Activated CD4-positive, alpha-beta T cell treated with anti-CD3 and anti-CD28 coated beads for 36 hours (primary cell): ENCODE measurements at regions of chr20 and their contacts with region 1.

Region 1: DNA sequence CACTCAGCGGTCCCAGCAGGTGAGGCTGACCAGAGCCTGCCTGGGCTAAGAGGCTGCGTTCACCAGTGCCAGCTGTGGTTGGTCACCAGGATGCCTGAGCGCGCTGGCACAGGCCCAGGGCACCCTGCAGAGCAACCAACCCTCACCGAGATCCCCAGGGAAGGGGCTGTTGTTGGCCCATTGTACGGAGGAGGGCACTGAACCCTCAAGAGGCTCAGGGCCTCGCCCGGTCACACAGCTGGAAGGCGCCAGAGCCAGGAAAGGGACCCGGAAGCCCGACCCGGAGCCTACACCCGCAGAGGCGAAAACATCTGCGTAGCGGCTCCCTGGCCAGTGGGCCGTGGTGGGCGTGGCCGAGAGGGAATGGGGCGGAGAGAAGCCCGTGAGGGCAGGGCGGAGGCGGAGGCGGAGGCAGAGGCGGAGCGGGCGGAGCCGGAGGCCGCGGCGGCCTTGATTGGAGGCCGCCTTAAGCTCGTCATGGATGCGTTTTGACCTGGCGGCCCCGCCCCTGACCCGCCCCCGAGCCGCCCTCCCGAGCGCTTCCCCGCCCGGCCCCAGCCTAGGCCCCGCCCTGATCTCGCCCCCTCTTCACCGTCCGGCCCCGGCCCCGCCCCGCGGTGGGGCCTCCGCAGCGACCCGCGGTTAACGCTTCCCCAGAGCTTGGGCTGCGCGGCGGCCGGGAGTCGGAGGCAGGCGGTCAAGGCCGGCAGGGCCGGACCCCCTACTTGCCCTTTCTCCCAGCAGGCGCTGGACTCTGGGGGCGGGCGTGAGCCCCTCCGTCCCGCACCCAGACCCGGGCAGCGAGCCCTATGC is 2.2 kb upstream of the MRGBP start:
- DNase-seq: peak; percentile 98
- ATAC-seq: peak; percentile 75
- H3K4me3 Mint-ChIP-seq: peak overlapping the region; percentile 80
- H3K27ac Mint-ChIP-seq: peak overlapping the region; percentile 88
- H3K4me1 Mint-ChIP-seq: peaks cover 31% of the 10 kb centered on the region
- H3K27me3 Mint-ChIP-seq: no peaks in the 10 kb centered on the region

Region 2: GRCh38 chr20:61303697-61304096 is 1490.4 kb before region 1 on chr20:
- CTCF ChIA-PET with region 1: no interaction called
- POLR2A ChIA-PET with region 1: no interaction called
- intact Hi-C with region 1: no loop called
- DNase-seq: no peak
- ATAC-seq: no peak
- H3K4me3 Mint-ChIP-seq: no peak overlapping the region
- H3K27ac Mint-ChIP-seq: no peak overlapping the region
- H3K4me1 Mint-ChIP-seq: no peaks in the 10 kb centered on the region
- H3K27me3 Mint-ChIP-seq: no peaks in the 10 kb centered on the region

Region 3: GRCh38 chr20:62182613-62183425 is 611.3 kb before region 1 on chr20 and contains the start of gene MTG2:
- CTCF ChIA-PET with region 1: no interaction called
- POLR2A ChIA-PET with region 1: no interaction called
- intact Hi-C with region 1: loop called in 1 of 2 experiments (anchors 5 kb)
- DNase-seq: peak; percentile 97
- ATAC-seq: peak; percentile 99
- H3K4me3 Mint-ChIP-seq: peak within 1 kb of the TSS; percentile 88
- H3K27ac Mint-ChIP-seq: peak within 1 kb of the TSS; percentile 87
- H3K4me1 Mint-ChIP-seq: peaks cover 39% of the 10 kb centered on the region
- H3K27me3 Mint-ChIP-seq: no peaks in the 10 kb centered on the region
- total RNA-seq, gene MTG2: 38.0 to 44.9 TPM

Region 4: DNA sequence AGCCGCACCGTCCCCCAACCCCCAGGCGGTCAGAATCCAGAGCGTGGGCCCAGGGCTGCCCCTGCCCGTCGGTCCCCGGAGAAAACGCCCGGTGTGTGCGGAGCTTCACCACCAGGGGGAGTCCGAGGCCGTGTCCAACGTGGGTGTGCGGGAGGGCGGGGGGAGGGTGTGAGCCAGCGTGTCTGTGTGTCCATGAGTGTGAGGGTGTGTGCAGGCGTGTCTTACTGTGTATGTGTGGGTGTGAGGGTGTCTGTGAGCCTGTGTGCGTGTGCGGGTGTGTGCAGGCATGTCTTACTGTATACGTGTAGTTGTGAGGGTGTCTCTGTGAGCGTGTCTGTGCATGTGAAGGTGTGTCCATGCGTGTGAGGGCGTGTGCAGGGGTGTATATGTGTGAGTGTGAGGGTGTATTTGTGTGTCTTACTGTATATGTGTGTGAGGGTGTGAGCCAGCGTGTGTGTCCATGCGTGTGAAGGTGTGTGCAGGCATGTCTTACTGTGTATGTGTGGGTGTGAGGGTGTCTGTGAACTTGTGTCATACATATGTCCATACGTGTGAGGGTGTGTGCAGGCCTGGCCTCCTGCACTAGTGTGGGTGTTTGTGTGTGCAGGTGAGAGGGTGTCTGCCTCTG is 293.8 kb before region 1 on chr20:
- CTCF ChIA-PET with region 1: interaction called, 4 read pairs
- POLR2A ChIA-PET with region 1: no interaction called
- intact Hi-C with region 1: loop called (anchors 1 kb)
- DNase-seq: peak; percentile 91
- ATAC-seq: peak; percentile 14
- H3K4me3 Mint-ChIP-seq: no peak overlapping the region
- H3K27ac Mint-ChIP-seq: peak overlapping the region; percentile 82
- H3K4me1 Mint-ChIP-seq: peaks cover 32% of the 10 kb centered on the region
- H3K27me3 Mint-ChIP-seq: peaks cover 1% of the 10 kb centered on the region

Region 5: DNA sequence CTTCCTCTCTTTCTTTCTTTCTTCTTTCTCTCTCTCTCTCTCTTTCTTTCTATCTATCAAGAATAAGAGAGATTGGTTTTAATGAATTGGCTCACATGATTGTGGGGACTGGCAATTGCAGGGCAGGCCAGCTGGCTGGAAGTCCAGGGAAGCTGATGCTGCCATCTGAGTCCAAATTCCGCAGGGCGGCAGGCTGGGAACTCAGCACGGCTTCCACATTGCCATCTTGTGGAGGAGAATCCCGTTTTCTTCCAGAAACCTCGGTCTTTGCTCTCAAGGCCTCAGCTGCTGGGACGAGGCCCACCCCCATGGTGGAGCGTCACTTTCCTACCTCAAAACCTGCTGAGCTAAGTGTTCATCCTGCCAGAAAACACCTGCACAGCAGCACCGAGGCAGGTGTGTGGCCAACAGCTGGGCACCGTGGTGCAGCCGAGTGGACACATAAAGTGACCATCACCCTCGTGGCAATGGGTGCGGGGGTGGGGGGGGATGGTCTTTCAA is 210.6 kb before region 1 on chr20:
- CTCF ChIA-PET with region 1: no interaction called
- POLR2A ChIA-PET with region 1: no interaction called
- intact Hi-C with region 1: no loop called
- DNase-seq: no peak
- ATAC-seq: no peak
- H3K4me3 Mint-ChIP-seq: no peak overlapping the region
- H3K27ac Mint-ChIP-seq: no peak overlapping the region
- H3K4me1 Mint-ChIP-seq: no peaks in the 10 kb centered on the region
- H3K27me3 Mint-ChIP-seq: peaks cover 41% of the 10 kb centered on the region

Region 6: DNA sequence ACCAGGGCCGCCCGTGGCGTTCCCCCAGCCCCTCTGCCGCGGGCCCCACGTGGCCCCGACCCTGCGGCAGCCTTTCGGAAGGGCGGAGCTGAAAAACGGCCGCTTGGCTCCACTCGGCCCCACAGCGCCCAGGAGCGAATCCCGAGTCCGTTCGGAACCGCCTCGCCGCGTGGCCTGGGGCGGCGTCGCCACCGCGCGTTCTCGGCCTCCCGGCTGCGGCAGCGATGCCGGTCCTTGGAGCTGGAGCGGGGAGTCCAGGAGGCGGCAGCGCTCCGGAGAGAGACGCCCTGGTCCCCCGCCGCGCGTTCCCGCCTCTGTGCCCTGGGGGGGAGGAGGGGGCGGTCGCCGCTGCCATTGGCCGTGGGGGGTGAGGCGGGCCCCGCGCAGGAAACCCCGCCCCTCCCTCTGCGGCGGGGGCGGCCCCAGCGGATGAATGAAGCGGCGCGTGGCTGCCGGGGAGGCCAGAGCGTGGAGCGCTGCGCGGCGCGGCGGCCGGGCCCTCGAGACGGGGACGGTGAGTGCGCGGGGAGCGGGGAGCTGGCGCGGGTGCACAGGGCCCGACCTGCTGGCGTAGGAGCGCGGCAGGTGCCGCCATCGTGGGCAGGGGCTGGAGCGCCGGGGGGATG is 152.0 kb before region 1 on chr20 and contains the start of gene SLCO4A1:
- CTCF ChIA-PET with region 1: interaction called, 3 read pairs
- POLR2A ChIA-PET with region 1: interaction called, 4 read pairs
- intact Hi-C with region 1: loop called in 1 of 2 experiments (anchors 1 kb)
- DNase-seq: peak; percentile 93
- ATAC-seq: peak; percentile 94
- H3K4me3 Mint-ChIP-seq: peak within 1 kb of the TSS; percentile 79
- H3K27ac Mint-ChIP-seq: peak within 1 kb of the TSS; percentile 69
- H3K4me1 Mint-ChIP-seq: peaks cover 11% of the 10 kb centered on the region
- H3K27me3 Mint-ChIP-seq: peaks cover 4% of the 10 kb centered on the region
- total RNA-seq, gene SLCO4A1: 40.5 to 43.4 TPM

Region 7: GRCh38 chr20:62740286-62741141 is 53.6 kb before region 1 on chr20:
- CTCF ChIA-PET with region 1: interaction called, 8 read pairs
- POLR2A ChIA-PET with region 1: no interaction called
- intact Hi-C with region 1: loop called (anchors 1 to 5 kb)
- DNase-seq: peak; percentile 90
- ATAC-seq: peak; percentile 86
- H3K4me3 Mint-ChIP-seq: peak overlapping the region; percentile 58
- H3K27ac Mint-ChIP-seq: peak overlapping the region; percentile 89
- H3K4me1 Mint-ChIP-seq: peaks cover 52% of the 10 kb centered on the region
- H3K27me3 Mint-ChIP-seq: peaks cover 3% of the 10 kb centered on the region

Region 8: GRCh38 chr20:62926239-62927104 is 132.4 kb after region 1 on chr20 and contains the start of gene DIDO1:
- CTCF ChIA-PET with region 1: no interaction called
- POLR2A ChIA-PET with region 1: no interaction called
- intact Hi-C with region 1: loop called in 1 of 2 experiments (anchors 2 kb)
- DNase-seq: peak; percentile 94
- ATAC-seq: peak; percentile 78
- H3K4me3 Mint-ChIP-seq: peak within 1 kb of the TSS; percentile 94
- H3K27ac Mint-ChIP-seq: peak within 1 kb of the TSS; percentile 96
- H3K4me1 Mint-ChIP-seq: peaks cover 64% of the 10 kb centered on the region
- H3K27me3 Mint-ChIP-seq: no peaks in the 10 kb centered on the region
- total RNA-seq, gene DIDO1: 43.7 to 49.7 TPM

Region 9: GRCh38 chr20:63032861-63033634 is 238.9 kb after region 1 on chr20:
- CTCF ChIA-PET with region 1: no interaction called
- POLR2A ChIA-PET with region 1: no interaction called
- intact Hi-C with region 1: no loop called
- DNase-seq: peak; percentile 37
- ATAC-seq: peak; percentile 27
- H3K4me3 Mint-ChIP-seq: no peak overlapping the region
- H3K27ac Mint-ChIP-seq: no peak overlapping the region
- H3K4me1 Mint-ChIP-seq: peaks cover 15% of the 10 kb centered on the region
- H3K27me3 Mint-ChIP-seq: peaks cover 17% of the 10 kb centered on the region

Region 10: GRCh38 chr20:63718996-63719395 is 924.9 kb after region 1 on chr20:
- CTCF ChIA-PET with region 1: no interaction called
- POLR2A ChIA-PET with region 1: no interaction called
- intact Hi-C with region 1: no loop called
- DNase-seq: no peak
- ATAC-seq: no peak
- H3K4me3 Mint-ChIP-seq: no peak overlapping the region
- H3K27ac Mint-ChIP-seq: peak overlapping the region; percentile 33
- H3K4me1 Mint-ChIP-seq: peaks cover 45% of the 10 kb centered on the region
- H3K27me3 Mint-ChIP-seq: no peaks in the 10 kb centered on the region

Region 11: GRCh38 chr20:64062596-64063388 is 1268.7 kb after region 1 on chr20 and contains the start of gene TCEA2:
- CTCF ChIA-PET with region 1: no interaction called
- POLR2A ChIA-PET with region 1: no interaction called
- intact Hi-C with region 1: loop called in 1 of 2 experiments (anchors 5 kb)
- DNase-seq: peak; percentile 98
- ATAC-seq: peak; percentile 83
- H3K4me3 Mint-ChIP-seq: peak within 1 kb of the TSS; percentile 82
- H3K27ac Mint-ChIP-seq: peak within 1 kb of the TSS; percentile 79
- H3K4me1 Mint-ChIP-seq: peaks cover 51% of the 10 kb centered on the region
- H3K27me3 Mint-ChIP-seq: no peaks in the 10 kb centered on the region
- total RNA-seq, gene TCEA2: 40.6 to 50.0 TPM